ENCODE measurements at regions of chr18 and their contacts with region 1.

Region 1: GRCh38 chr18:3012964-3013804 is at the start of gene LPIN2:
- DNase-seq: peak; percentile 98 to 100 (median 99)
- H3K4me3 ChIP-seq: peak within 1 kb of the TSS; percentile 45 to 91 (median 69)
- H3K27ac ChIP-seq: peak within 1 kb of the TSS; percentile 60 to 98 (median 94)
- H3K4me1 ChIP-seq: peaks cover 5 to 47% of the 10 kb centered on the region in 2 donors
- H3K27me3 ChIP-seq: no peaks in the 10 kb centered on the region
- CTCF ChIP-seq: no peak
- POLR2A ChIP-seq: peak; percentile 83 to 85
- total RNA-seq, gene LPIN2: 22.9 to 48.6 (median 30.1) TPM

Region 2: GRCh38 chr18:2853926-2854664 is 159.1 kb before region 1 on chr18:
- intact Hi-C with region 1: loop called in 1 of 2 experiments (anchors 5 kb)
- DNase-seq: no peak
- H3K4me3 ChIP-seq: no peak overlapping the region
- H3K27ac ChIP-seq: no peak overlapping the region
- H3K4me1 ChIP-seq: peaks cover 6 to 17% of the 10 kb centered on the region in 2 donors
- H3K27me3 ChIP-seq: no peaks in the 10 kb centered on the region
- CTCF ChIP-seq: no peak
- POLR2A ChIP-seq: no peak

Region 3: DNA sequence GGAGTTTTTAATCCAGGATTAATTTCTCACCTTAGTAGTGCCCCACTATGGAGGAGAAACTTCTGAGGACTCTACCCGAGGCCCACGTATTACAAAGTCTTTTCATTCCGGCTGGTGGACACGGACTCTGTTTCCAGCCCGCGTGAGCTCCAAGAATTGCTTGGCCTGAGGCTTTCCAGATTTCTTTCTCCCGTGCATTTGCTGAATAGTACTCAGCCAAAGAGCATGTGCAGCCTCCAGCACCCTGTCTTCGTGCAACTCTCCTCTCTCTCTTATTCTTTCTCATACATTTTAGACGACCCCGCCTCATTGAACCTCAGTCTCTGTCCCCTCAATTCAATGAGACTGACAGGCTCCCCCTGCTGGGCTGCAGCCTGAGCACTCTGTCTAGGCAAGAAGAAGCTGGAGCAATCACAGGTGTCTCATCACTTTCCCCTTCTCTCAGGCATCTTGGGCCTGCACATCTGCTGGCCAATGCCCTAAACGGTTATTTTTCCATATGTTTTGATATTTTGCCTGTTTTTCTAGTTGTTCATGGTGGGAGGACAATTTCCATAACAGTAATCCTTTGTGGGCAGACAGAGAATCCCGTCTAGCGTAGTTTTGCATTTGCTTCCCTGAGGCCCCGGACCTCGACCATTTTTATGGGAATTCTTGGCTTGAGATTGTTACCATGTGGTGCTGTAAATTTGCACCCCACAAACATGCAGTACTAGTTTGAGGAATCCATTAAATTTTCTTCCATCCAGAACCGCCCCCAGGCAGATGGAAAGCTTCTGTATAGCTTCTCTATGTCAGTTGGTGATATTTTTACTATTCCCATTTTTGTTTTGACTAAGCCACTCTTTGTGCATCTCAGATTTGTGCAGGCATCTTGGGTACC is 49.9 kb after region 1 on chr18:
- intact Hi-C with region 1: loop called in 1 of 2 experiments (anchors 10 kb)
- DNase-seq: peak; percentile 22 to 74 (median 53)
- H3K4me3 ChIP-seq: no peak overlapping the region
- H3K27ac ChIP-seq: no peak overlapping the region
- H3K4me1 ChIP-seq: peaks cover 0 to 20% of the 10 kb centered on the region in 2 donors
- H3K27me3 ChIP-seq: no peaks in the 10 kb centered on the region
- CTCF ChIP-seq: peak; percentile 19 to 65 (median 50)
- POLR2A ChIP-seq: no peak